Stomach (tissue), 19 donors: ENCODE measurements at regions of chr3 and their contacts with region 1.

Region 1: DNA sequence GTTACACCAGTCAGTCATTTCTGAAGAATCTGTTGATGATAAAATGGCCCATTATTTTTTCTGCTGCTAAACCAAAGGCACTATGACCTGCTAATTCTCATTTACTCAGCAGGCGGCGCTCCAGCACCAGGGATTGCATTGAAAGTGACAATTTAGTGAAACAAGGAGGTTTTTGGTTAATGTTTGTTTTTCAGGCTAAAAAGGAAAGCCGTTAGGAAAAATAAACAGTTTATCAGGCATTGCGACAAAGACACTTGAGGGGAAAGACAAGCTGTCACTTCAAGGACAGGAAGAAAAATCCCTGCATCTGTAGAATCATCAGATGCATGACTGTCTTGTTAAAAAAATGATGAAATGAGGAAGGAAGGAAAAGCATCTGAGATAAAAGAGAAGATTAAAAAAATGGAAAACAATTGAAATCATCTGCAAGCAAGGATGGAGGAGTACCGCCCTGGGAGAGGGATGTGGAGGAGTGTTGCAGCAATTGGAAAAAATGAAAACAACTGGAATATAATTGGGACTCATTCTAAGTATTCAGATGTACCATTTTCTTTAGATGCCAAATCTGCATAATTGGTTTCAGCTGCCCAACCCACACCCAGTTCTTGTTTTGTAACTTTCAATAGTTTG is 54.0 kb downstream of the NR1D2 start:
- DNase-seq: peak; percentile 77 to 81
- H3K4me3 ChIP-seq: no peak overlapping the region
- H3K27ac ChIP-seq: no peak overlapping the region
- H3K4me1 ChIP-seq: peaks cover 0 to 16% (median 7%) of the 10 kb centered on the region in 4 donors
- H3K27me3 ChIP-seq: no peaks in the 10 kb centered on the region
- CTCF ChIP-seq: peak in 5 of 7 experiments; percentile 73 to 92 (median 84)
- EP300 ChIP-seq: no peak
- POLR2A ChIP-seq: no peak

Region 2: GRCh38 chr3:23319366-23320312 is 679.5 kb before region 1 on chr3:
- intact Hi-C with region 1: no loop called
- DNase-seq: peak in 1 of 2 donors; percentile 14
- H3K4me3 ChIP-seq: no peak overlapping the region
- H3K27ac ChIP-seq: no peak overlapping the region
- H3K4me1 ChIP-seq: peaks cover 0 to 20% (median 2%) of the 10 kb centered on the region in 4 donors
- H3K27me3 ChIP-seq: no peaks in the 10 kb centered on the region
- CTCF ChIP-seq: no peak
- EP300 ChIP-seq: no peak
- POLR2A ChIP-seq: no peak

Region 3: DNA sequence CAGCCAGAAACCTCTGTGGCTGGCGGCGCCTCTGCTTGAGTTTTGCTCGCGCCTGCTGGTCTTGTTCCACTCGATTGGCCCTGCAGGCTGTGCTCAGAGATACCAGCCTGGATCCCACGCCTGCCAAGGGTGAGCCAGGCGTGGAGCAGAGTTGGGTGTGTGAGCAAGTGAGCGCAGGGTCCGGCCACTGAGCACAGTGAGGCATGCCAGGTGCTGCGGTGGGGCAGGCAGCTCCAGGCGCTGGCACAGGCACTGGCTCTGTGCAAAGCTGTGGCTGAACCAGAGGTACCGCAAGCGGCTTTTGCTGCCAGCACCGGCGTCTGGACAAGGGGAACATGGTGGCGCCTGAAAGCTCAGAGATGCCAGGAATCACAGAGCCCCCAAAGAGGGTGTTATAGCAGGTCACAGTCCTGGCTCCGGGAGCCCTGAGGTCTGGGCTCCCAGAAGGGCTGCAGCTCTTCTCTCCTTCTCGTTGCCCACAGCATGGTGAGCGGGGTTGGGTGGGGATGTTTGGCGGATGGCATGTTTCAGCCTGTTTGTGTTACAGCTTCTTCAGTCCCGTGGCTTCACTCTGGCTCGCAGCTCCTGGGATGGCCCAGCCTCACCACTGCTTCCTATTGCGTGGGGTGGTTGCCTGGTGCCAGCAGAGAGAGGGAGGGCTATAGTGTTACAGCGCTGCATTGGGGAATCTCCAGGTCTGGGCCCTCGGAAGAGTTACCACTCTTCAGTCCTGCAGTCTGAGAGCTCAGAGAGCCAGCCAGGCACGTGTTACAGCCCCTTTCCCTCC is 19.9 kb after region 1 on chr3:
- intact Hi-C with region 1: no loop called
- DNase-seq: no peak
- H3K4me3 ChIP-seq: no peak overlapping the region
- H3K27ac ChIP-seq: no peak overlapping the region
- H3K4me1 ChIP-seq: no peaks in the 10 kb centered on the region
- H3K27me3 ChIP-seq: no peaks in the 10 kb centered on the region
- CTCF ChIP-seq: no peak
- EP300 ChIP-seq: no peak
- POLR2A ChIP-seq: no peak

Region 4: GRCh38 chr3:24680214-24680967 is 681.3 kb after region 1 on chr3:
- intact Hi-C with region 1: loop called (anchors 10 kb)
- DNase-seq: peak; percentile 66 to 84
- H3K4me3 ChIP-seq: no peak overlapping the region
- H3K27ac ChIP-seq: no peak overlapping the region
- H3K4me1 ChIP-seq: peaks cover 0 to 21% (median 13%) of the 10 kb centered on the region in 4 donors
- H3K27me3 ChIP-seq: no peaks in the 10 kb centered on the region
- CTCF ChIP-seq: peak in 4 of 7 experiments; percentile 34 to 72 (median 50)
- EP300 ChIP-seq: no peak
- POLR2A ChIP-seq: no peak